Psoas muscle (tissue), 8 donors: ENCODE measurements at regions of chr5 and their contacts with region 1.

Region 1: GRCh38 chr5:147558826-147559225 is 49.0 kb upstream of the DPYSL3 start:
- DNase-seq: peak in 1 of 2 donors; percentile 51
- ATAC-seq: peak; percentile 67 to 91 (median 88)
- H3K4me3 ChIP-seq: no peak overlapping the region
- H3K27ac ChIP-seq: no peak overlapping the region
- H3K4me1 ChIP-seq: peaks cover 1% of the 10 kb centered on the region
- H3K27me3 ChIP-seq: no peaks in the 10 kb centered on the region
- CTCF ChIP-seq: peak; percentile 57

Region 2: DNA sequence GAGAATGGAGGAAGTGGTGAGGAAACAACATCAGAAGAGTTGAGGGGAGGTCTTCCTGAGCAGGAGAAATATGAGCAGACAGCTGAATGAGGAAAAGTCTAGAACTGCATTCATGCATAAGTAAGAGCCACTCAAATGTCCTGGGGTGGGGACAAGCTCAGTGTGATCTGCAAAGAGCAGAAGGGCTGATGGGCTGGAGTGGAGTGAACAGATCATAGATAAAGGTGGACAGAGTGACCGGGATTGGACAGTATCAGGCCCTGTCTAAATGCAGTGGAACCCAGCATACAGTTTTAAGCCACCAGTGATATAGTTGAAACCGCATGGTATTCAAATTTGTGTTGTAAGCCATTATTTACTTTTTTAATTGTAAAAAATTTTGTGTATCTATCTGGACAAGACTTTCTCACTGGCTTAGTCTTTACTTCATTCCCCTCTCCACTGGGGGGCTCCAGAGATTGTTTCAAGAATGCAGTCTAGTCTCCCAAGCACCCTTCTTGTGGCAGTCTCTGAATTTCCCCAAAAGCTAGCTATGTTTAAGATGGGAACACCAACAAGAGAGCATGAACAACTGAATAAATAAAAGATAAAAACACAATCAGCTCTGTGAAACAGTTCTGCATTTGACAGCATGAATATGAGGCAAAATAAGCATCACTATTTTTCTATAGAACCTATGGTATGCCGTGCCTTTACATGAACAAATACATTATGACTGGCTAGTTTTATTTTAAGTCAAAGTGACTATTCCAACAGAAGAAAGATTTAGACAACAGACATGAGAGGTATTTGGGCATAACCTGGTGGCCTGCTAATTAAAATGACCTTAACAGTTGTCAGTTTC is 334.7 kb before region 1 on chr5:
- intact Hi-C with region 1: loop called (anchors 1 to 5 kb)
- DNase-seq: no peak
- ATAC-seq: peak in 3 of 4 donors; percentile 46 to 77 (median 73)
- H3K4me3 ChIP-seq: no peak overlapping the region
- H3K27ac ChIP-seq: no peak overlapping the region
- H3K4me1 ChIP-seq: no peaks in the 10 kb centered on the region
- H3K27me3 ChIP-seq: no peaks in the 10 kb centered on the region
- CTCF ChIP-seq: peak; percentile 61

Region 3: DNA sequence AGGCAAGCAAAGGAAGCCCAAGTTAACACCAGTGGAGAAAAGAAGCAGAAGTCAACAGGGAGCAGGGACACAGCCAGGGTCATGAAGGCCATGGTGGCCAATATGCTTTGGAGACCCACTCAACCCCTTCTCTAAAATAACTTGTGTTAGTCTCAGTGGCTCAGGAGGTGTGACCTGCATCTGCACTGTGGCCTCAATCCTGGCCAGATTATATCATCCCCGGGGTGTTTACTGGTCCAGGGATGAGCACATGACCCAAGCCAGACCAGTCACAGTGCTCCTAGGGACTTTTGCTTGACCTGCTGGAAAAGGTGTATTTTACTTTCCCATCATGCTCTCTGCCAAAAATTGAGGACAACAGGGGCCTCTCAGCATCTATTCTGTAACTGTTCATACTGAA is 154.1 kb before region 1 on chr5:
- intact Hi-C with region 1: loop called in 1 of 2 experiments (anchors 5 kb)
- DNase-seq: no peak
- ATAC-seq: peak; percentile 31 to 39 (median 38)
- H3K4me3 ChIP-seq: no peak overlapping the region
- H3K27ac ChIP-seq: peak overlapping the region; percentile 87
- H3K4me1 ChIP-seq: peaks cover 22% of the 10 kb centered on the region
- H3K27me3 ChIP-seq: no peaks in the 10 kb centered on the region
- CTCF ChIP-seq: no peak

Region 4: DNA sequence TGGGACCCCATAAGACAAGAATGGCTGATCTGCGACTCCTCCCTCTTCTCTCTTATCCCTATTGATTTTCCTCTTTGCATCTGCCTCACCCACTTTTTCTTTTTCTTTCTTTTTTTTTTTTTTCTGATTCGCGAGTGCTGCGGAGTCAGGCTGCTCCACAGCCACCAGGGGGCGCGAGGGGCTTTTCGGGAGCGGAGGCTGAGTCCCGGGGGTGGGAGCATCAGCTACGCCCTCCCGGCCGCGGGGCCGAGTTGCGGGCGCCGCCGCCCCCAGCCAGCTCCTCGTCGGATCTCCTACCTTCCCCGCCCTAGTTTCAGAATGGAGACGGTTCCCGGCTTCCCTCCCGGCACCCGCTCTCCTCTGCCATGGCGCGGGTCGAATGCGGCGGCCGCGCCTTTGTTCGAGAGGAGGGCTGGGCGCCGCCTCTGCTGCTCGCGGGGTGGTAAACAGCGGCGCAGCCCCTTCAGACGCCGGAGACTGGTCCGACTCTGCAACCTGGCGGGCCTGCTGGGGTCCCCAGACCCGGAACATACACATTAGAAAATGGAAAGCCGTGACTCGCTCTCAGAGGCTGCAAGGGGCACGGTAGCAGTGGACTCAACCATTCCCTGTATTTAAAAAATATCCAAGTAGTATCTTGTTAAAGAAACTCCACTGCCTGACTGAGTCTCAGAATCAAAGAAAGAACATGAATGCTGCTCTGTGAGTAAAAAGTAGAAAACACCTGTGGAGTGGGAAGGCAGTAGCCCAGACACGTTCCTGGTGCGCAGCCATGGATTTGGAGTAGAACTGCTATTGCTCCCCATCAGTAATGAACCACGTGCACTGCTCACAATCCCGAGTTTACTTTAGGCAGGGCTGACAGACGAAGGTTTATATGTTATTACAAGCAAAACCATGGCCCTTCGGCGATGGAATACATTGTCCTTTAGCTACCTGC is 104.7 kb before region 1 on chr5:
- intact Hi-C with region 1: loop called (anchors 1 to 5 kb)
- DNase-seq: peak; percentile 92 to 94
- ATAC-seq: peak; percentile 86 to 90 (median 88)
- H3K4me3 ChIP-seq: peak overlapping the region; percentile 77
- H3K27ac ChIP-seq: peak overlapping the region; percentile 79
- H3K4me1 ChIP-seq: peaks cover 17% of the 10 kb centered on the region
- H3K27me3 ChIP-seq: peaks cover 0 to 8% (median 0%) of the 10 kb centered on the region in 3 donors
- CTCF ChIP-seq: peak; percentile 89

Region 5: DNA sequence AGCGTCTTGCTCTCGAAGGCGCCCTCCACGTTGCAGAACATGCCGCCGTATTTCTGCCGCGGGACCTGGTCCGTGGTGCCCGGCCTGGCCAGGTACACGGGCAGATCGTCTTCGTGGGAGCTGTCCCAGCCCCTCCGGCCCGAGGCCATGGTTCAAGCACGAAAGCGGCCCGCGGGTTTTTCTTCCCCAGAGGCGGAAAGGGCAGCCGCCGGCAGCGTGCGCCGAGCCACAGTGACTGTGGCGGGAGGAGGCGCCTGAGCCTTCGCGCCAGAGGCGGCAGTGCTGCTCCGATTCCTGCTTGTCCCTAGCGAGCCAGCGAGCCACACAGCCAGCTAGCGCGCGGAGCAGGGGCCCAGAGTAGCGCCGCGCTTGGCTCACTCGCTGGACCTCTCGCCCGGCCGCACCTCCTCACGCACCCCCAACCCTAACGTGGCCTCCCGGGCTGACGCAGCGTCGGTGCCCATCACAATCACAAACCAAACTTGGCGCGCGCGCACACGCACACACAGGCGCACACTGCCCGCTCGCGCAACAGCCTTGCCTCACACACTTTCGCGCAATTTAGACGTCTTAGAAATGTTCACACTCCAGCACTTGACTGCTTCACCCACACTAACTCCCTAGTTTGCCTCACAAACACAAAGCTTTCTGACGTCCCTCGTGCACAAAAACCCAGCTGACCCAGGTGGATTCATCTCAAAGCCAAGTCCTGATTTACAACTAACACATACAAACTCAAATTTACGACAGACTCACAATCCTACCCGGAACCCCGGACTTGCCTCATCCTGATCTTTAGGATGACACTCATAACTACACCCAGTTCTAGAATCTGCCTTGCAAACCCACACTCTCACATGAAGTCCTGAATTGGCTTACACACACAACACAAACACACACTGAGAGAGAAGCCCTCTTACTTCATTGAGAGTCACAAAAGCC is 48.8 kb before region 1 on chr5 and contains the start of gene DPYSL3:
- intact Hi-C with region 1: loop called in 1 of 2 experiments (anchors 5 kb)
- DNase-seq: peak; percentile 81 to 86
- ATAC-seq: peak; percentile 86 to 98 (median 96)
- H3K4me3 ChIP-seq: peak within 1 kb of the TSS; percentile 78
- H3K27ac ChIP-seq: peak within 1 kb of the TSS; percentile 49
- H3K4me1 ChIP-seq: no peaks in the 10 kb centered on the region
- H3K27me3 ChIP-seq: peaks cover 0 to 14% (median 2%) of the 10 kb centered on the region in 3 donors
- CTCF ChIP-seq: peak; percentile 26
- total RNA-seq, gene DPYSL3: 18.0 to 58.5 (median 38.4) TPM

Region 6: GRCh38 chr5:147635882-147636728 is 77.3 kb after region 1 on chr5:
- intact Hi-C with region 1: no loop called
- DNase-seq: no peak
- ATAC-seq: no peak
- H3K4me3 ChIP-seq: no peak overlapping the region
- H3K27ac ChIP-seq: no peak overlapping the region
- H3K4me1 ChIP-seq: no peaks in the 10 kb centered on the region
- H3K27me3 ChIP-seq: no peaks in the 10 kb centered on the region
- CTCF ChIP-seq: no peak